CD8-positive, alpha-beta T cell (primary cell): ENCODE measurements at regions of chr5 and their contacts with region 1.

Region 1: DNA sequence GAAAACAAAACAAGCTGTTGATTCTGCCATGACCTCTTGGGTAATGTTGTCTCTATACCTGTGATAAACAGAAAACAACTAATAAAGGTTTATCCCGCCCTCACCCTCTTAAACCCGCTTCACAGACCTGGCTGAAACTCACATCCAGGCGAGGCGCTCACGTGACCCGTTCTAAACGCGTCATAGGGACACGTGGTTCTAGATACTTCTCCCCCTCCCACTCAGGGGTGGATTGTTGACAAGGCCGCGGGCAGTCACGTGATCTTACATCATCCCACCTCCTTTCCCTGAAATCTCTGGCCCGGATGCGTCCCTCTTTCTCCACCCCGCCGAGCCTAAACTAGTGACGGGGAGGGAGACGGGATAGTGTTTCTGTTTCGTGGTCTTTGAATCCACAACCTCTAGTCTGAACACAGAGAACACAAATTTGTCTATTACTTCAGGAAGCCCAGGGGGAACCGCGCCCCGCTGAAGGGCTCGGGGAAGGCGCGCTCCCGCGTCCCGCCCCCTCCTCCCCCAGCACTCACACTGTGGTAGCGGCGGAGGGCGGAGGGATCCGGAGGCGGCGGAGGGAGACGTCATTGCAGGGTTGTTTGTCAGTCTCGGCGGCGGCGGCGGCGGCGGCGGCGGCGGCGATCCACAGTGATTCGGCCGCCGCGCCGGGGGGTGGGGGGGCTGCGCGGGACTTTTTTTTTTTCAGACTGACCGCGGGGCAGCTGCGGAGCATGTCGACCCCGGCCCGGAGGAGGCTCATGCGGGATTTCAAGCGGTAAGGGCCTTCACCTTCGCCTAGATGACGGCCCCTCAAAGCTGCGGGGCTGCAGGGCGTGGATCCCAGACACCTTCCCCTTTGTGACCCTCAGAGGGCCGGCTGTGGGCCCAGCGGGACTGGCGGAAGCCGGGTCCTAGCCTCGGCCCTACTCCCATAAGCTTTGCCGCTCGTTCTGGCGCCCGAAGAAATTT is at the start of gene UBE2B:
- DNase-seq: peak; percentile 93 to 100 (median 98)
- ATAC-seq: peak; percentile 72
- H3K4me3 ChIP-seq: peak within 1 kb of the TSS; percentile 88 to 100
- H3K4me3 Mint-ChIP-seq: peak within 1 kb of the TSS; percentile 91
- H3K27ac ChIP-seq: peak within 1 kb of the TSS; percentile 98 to 99
- H3K27ac Mint-ChIP-seq: peak within 1 kb of the TSS; percentile 99
- H3K4me1 ChIP-seq: peaks cover 39% of the 10 kb centered on the region
- H3K4me1 Mint-ChIP-seq: peaks cover 55% of the 10 kb centered on the region
- H3K27me3 ChIP-seq: no peaks in the 10 kb centered on the region
- H3K27me3 Mint-ChIP-seq: no peaks in the 10 kb centered on the region
- CTCF ChIP-seq: no peak
- total RNA-seq, gene UBE2B: 249 to 250 TPM

Region 2: GRCh38 chr5:133977161-133977787 is 393.9 kb before region 1 on chr5:
- CTCF ChIA-PET with region 1: no interaction called
- POLR2A ChIA-PET with region 1: no interaction called
- intact Hi-C with region 1: no loop called
- DNase-seq: no peak
- ATAC-seq: no peak
- H3K4me3 ChIP-seq: no peak overlapping the region
- H3K4me3 Mint-ChIP-seq: no peak overlapping the region
- H3K27ac ChIP-seq: no peak overlapping the region
- H3K27ac Mint-ChIP-seq: peak overlapping the region; percentile 10
- H3K4me1 ChIP-seq: no peaks in the 10 kb centered on the region
- H3K4me1 Mint-ChIP-seq: peaks cover 8% of the 10 kb centered on the region
- H3K27me3 ChIP-seq: no peaks in the 10 kb centered on the region
- H3K27me3 Mint-ChIP-seq: no peaks in the 10 kb centered on the region
- CTCF ChIP-seq: no peak

Region 3: GRCh38 chr5:134004592-134005375 is 366.4 kb before region 1 on chr5 and contains the start of gene VDAC1:
- CTCF ChIA-PET with region 1: no interaction called
- POLR2A ChIA-PET with region 1: no interaction called
- intact Hi-C with region 1: loop called (anchors 1 to 10 kb)
- DNase-seq: peak; percentile 68 to 96 (median 86)
- ATAC-seq: peak; percentile 80
- H3K4me3 ChIP-seq: peak within 1 kb of the TSS; percentile 68 to 81
- H3K4me3 Mint-ChIP-seq: peak within 1 kb of the TSS; percentile 95
- H3K27ac ChIP-seq: peak within 1 kb of the TSS; percentile 81 to 98
- H3K27ac Mint-ChIP-seq: peak within 1 kb of the TSS; percentile 97
- H3K4me1 ChIP-seq: peaks cover 30% of the 10 kb centered on the region
- H3K4me1 Mint-ChIP-seq: peaks cover 43% of the 10 kb centered on the region
- H3K27me3 ChIP-seq: no peaks in the 10 kb centered on the region
- H3K27me3 Mint-ChIP-seq: no peaks in the 10 kb centered on the region
- CTCF ChIP-seq: no peak
- total RNA-seq, gene VDAC1: 68.1 to 71.1 TPM

Region 4: GRCh38 chr5:134304311-134304710 is 66.8 kb before region 1 on chr5:
- CTCF ChIA-PET with region 1: no interaction called
- POLR2A ChIA-PET with region 1: interaction called, 5 read pairs
- intact Hi-C with region 1: loop called in 1 of 2 experiments (anchors 5 kb)
- DNase-seq: no peak
- ATAC-seq: no peak
- H3K4me3 ChIP-seq: no peak overlapping the region
- H3K4me3 Mint-ChIP-seq: no peak overlapping the region
- H3K27ac ChIP-seq: no peak overlapping the region
- H3K27ac Mint-ChIP-seq: no peak overlapping the region
- H3K4me1 ChIP-seq: no peaks in the 10 kb centered on the region
- H3K4me1 Mint-ChIP-seq: no peaks in the 10 kb centered on the region
- H3K27me3 ChIP-seq: no peaks in the 10 kb centered on the region
- H3K27me3 Mint-ChIP-seq: no peaks in the 10 kb centered on the region
- CTCF ChIP-seq: no peak

Region 5: GRCh38 chr5:134511788-134512650 is 140.9 kb after region 1 on chr5:
- CTCF ChIA-PET with region 1: no interaction called
- POLR2A ChIA-PET with region 1: no interaction called
- intact Hi-C with region 1: no loop called
- DNase-seq: no peak
- ATAC-seq: no peak
- H3K4me3 ChIP-seq: no peak overlapping the region
- H3K4me3 Mint-ChIP-seq: no peak overlapping the region
- H3K27ac ChIP-seq: no peak overlapping the region
- H3K27ac Mint-ChIP-seq: no peak overlapping the region
- H3K4me1 ChIP-seq: no peaks in the 10 kb centered on the region
- H3K4me1 Mint-ChIP-seq: peaks cover 5% of the 10 kb centered on the region
- H3K27me3 ChIP-seq: no peaks in the 10 kb centered on the region
- H3K27me3 Mint-ChIP-seq: no peaks in the 10 kb centered on the region
- CTCF ChIP-seq: no peak

Region 6: DNA sequence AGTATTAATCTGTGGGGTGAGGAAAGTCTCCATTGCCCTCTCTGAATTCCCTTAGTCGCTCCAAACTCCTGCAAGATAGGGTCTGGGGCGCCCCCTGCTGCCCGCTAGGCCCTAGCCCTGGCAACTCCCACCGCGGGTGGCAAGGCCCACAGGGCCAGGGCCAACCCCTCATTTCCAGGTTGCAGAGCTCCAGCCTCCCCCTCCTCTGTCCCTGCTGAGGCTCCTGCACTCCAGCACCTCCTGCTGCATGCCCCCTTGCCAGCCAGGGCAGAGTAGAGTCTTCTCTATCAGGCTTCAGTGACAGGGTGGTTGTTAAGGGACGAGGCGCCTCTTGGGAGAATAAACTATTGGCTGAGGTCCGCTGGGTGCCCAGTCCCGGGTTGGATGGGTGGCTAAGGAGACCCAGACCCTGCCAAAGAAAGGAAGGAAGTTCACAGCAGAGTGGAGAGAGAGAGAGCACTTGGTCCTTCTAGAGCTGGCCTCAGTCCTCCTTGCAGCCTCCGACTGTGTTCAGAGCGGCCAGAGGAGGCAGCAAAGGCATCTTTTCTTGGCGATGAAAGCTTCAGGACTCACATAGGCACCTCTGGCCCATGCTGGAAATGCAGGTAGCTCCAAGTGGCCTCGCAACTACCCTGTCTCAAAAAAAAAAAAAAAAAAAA is 215.8 kb after region 1 on chr5:
- CTCF ChIA-PET with region 1: interaction called, 8 read pairs
- POLR2A ChIA-PET with region 1: interaction called, 6 read pairs
- intact Hi-C with region 1: loop called in 1 of 2 experiments (anchors 2 kb)
- DNase-seq: peak; percentile 62 to 89 (median 80)
- ATAC-seq: peak; percentile 95
- H3K4me3 ChIP-seq: no peak overlapping the region
- H3K4me3 Mint-ChIP-seq: no peak overlapping the region
- H3K27ac ChIP-seq: no peak overlapping the region
- H3K27ac Mint-ChIP-seq: peak overlapping the region; percentile 13
- H3K4me1 ChIP-seq: peaks cover 4% of the 10 kb centered on the region
- H3K4me1 Mint-ChIP-seq: peaks cover 9% of the 10 kb centered on the region
- H3K27me3 ChIP-seq: no peaks in the 10 kb centered on the region
- H3K27me3 Mint-ChIP-seq: no peaks in the 10 kb centered on the region
- CTCF ChIP-seq: peak; percentile 87

Region 7: DNA sequence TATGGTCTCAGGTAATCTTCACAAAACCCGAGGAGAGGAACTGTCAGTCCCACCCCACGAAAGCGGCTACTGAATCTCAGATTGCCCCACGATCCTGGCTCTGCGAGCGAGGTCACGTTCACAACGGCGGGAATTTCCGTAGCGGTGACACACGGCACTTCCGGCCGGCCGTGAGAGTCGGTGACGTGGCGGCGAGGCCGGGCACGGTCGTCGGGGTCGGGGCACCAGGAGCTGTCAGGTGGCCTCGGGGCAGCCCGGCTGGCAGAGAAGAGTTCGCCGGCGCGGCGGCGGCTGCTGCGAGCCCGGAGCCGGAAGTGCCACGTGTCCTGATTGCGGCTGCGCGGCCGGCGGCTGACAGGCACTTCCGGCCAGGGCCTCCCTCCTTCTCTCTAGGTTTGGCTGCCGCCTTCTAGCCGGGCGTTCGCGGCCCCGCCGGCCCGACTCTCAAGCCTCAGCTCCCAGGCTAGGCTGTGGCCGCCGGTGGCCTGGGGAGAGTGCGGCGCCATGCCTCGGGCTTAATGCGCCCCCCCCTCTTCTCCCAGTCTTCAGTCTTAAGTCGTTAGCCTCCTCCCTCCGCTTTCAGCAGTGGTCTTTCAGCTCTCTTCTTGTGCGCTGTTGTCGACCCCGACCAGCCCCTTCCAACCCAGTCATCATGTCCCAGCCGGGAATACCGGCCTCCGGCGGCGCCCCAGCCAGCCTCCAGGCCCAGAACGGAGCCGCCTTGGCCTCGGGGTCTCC is 277.4 kb after region 1 on chr5 and contains the start of gene SEC24A:
- CTCF ChIA-PET with region 1: no interaction called
- POLR2A ChIA-PET with region 1: interaction called, 6 read pairs
- intact Hi-C with region 1: loop called (anchors 1 to 2 kb)
- DNase-seq: peak; percentile 75 to 98 (median 88)
- ATAC-seq: peak; percentile 77
- H3K4me3 ChIP-seq: peak within 1 kb of the TSS; percentile 74 to 98
- H3K4me3 Mint-ChIP-seq: peak within 1 kb of the TSS; percentile 96
- H3K27ac ChIP-seq: peak within 1 kb of the TSS; percentile 83 to 100
- H3K27ac Mint-ChIP-seq: peak within 1 kb of the TSS; percentile 99
- H3K4me1 ChIP-seq: peaks cover 12% of the 10 kb centered on the region
- H3K4me1 Mint-ChIP-seq: peaks cover 30% of the 10 kb centered on the region
- H3K27me3 ChIP-seq: no peaks in the 10 kb centered on the region
- H3K27me3 Mint-ChIP-seq: no peaks in the 10 kb centered on the region
- CTCF ChIP-seq: no peak
- total RNA-seq, gene SEC24A: 14.4 to 14.5 TPM

Region 8: DNA sequence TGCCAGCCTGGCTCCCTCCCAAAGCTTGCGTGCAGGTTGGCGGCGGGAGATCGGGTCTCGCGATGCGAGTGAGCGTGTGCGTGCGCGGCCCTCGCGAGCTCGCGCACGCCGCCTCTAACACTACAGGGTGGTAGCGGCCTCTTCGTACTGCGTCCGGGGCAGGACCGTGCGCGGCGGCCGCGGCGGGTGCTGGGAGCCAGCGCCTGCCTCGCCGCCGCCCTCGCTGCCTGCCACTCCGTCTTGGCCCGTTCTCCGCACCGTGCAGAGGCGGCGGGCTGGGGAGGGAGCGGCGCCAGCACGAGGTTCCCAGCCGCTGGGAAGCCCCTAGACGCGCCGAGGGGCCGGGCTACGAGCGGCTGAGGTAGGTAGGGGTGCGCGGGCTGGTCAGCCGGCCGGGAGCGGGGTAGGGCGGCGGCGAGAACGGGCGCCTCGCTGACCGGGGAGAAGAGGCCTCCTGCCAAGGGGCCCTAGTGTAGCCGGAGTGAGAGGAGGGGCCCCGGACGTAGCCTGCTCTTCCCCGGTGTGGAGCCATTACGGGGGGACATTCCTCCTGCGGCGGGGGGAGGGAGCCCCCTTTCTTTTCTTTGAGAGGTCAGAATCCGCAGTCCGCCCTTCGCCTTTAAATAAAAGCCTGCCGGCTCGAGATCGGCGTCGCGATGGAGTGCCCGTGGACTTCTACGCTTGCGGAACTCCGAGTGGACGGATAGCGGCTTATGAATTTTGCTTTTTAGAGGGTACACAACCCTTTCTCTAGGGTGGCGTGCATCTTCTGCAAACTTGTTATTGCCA is 474.9 kb after region 1 on chr5 and contains the start of gene C5orf24:
- CTCF ChIA-PET with region 1: no interaction called
- POLR2A ChIA-PET with region 1: no interaction called
- intact Hi-C with region 1: loop called (anchors 5 to 10 kb)
- DNase-seq: peak; percentile 82 to 98 (median 90)
- ATAC-seq: peak; percentile 92
- H3K4me3 ChIP-seq: peak within 1 kb of the TSS; percentile 85 to 94
- H3K4me3 Mint-ChIP-seq: peak within 1 kb of the TSS; percentile 87
- H3K27ac ChIP-seq: peak within 1 kb of the TSS; percentile 84 to 91
- H3K27ac Mint-ChIP-seq: peak within 1 kb of the TSS; percentile 94
- H3K4me1 ChIP-seq: peaks cover 18% of the 10 kb centered on the region
- H3K4me1 Mint-ChIP-seq: peaks cover 34% of the 10 kb centered on the region
- H3K27me3 ChIP-seq: no peaks in the 10 kb centered on the region
- H3K27me3 Mint-ChIP-seq: no peaks in the 10 kb centered on the region
- CTCF ChIP-seq: no peak
- total RNA-seq, gene C5orf24: 29.9 to 31.0 TPM

Region 9: GRCh38 chr5:135271533-135272310 is 900.6 kb after region 1 on chr5:
- CTCF ChIA-PET with region 1: no interaction called
- POLR2A ChIA-PET with region 1: no interaction called
- intact Hi-C with region 1: no loop called
- DNase-seq: no peak
- ATAC-seq: no peak
- H3K4me3 ChIP-seq: no peak overlapping the region
- H3K4me3 Mint-ChIP-seq: no peak overlapping the region
- H3K27ac ChIP-seq: no peak overlapping the region
- H3K27ac Mint-ChIP-seq: no peak overlapping the region
- H3K4me1 ChIP-seq: no peaks in the 10 kb centered on the region
- H3K4me1 Mint-ChIP-seq: no peaks in the 10 kb centered on the region
- H3K27me3 ChIP-seq: no peaks in the 10 kb centered on the region
- H3K27me3 Mint-ChIP-seq: no peaks in the 10 kb centered on the region
- CTCF ChIP-seq: no peak